IMR-90 (cell line): ENCODE measurements at regions of chr1 and their contacts with region 1.

Region 1: GRCh38 chr1:7401814-7402537 is 369.1 kb upstream of the VAMP3 start:
- DNase-seq: peak; percentile 100
- ATAC-seq: peak; percentile 98
- H3K4me3 ChIP-seq: no peak overlapping the region
- H3K27ac ChIP-seq: peak overlapping the region; percentile 35
- H3K4me1 ChIP-seq: peaks cover 8% of the 10 kb centered on the region
- H3K27me3 ChIP-seq: no peaks in the 10 kb centered on the region
- CTCF ChIP-seq: no peak
- POLR2A ChIP-seq: no peak
- RAD21 ChIP-seq: peak; percentile 44

Region 2: DNA sequence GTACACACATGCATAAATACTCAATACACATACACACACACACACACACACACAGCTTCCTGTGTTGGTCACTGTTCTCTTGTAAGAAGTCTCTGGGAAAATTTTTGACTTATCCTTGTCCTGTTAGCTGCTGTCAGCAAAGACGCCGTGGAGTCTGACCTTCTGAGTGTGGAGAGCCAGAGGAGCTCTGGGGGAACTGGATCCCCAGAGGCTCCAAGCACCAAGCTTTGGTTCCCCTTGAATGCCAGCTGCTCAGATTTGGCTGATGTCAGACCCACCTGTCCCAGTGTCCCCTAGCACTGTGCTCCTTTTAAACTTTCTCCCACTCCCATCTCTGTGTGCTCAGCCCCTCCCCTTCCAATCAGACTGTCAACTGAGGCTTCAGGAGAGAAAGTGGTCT is 297.6 kb before region 1 on chr1:
- CTCF ChIA-PET with region 1: no interaction called
- POLR2A ChIA-PET with region 1: no interaction called
- dilution Hi-C with region 1: no loop called
- in situ Hi-C with region 1: no loop called
- intact Hi-C with region 1: no loop called
- DNase-seq: no peak
- ATAC-seq: no peak
- H3K4me3 ChIP-seq: no peak overlapping the region
- H3K27ac ChIP-seq: no peak overlapping the region
- H3K4me1 ChIP-seq: no peaks in the 10 kb centered on the region
- H3K27me3 ChIP-seq: peaks cover 21% of the 10 kb centered on the region
- CTCF ChIP-seq: no peak
- POLR2A ChIP-seq: no peak
- RAD21 ChIP-seq: no peak

Region 3: GRCh38 chr1:7470880-7471638 is 69.1 kb after region 1 on chr1:
- CTCF ChIA-PET with region 1: no interaction called
- POLR2A ChIA-PET with region 1: no interaction called
- dilution Hi-C with region 1: no loop called
- in situ Hi-C with region 1: no loop called
- intact Hi-C with region 1: loop called (anchors 5 kb)
- DNase-seq: peak; percentile 99
- ATAC-seq: peak; percentile 79
- H3K4me3 ChIP-seq: no peak overlapping the region
- H3K27ac ChIP-seq: peak overlapping the region; percentile 97
- H3K4me1 ChIP-seq: peaks cover 28% of the 10 kb centered on the region
- H3K27me3 ChIP-seq: no peaks in the 10 kb centered on the region
- CTCF ChIP-seq: no peak
- POLR2A ChIP-seq: 0 out of 2 replicates have a peak, but pooled peaks have one; percentile 19
- RAD21 ChIP-seq: peak; percentile 36

Region 4: GRCh38 chr1:7704214-7705047 is 302.5 kb after region 1 on chr1:
- CTCF ChIA-PET with region 1: no interaction called
- POLR2A ChIA-PET with region 1: no interaction called
- dilution Hi-C with region 1: no loop called
- in situ Hi-C with region 1: no loop called
- intact Hi-C with region 1: no loop called
- DNase-seq: peak; percentile 78
- ATAC-seq: peak; percentile 100
- H3K4me3 ChIP-seq: peak overlapping the region; percentile 42
- H3K27ac ChIP-seq: no peak overlapping the region
- H3K4me1 ChIP-seq: peaks cover 3% of the 10 kb centered on the region; the same call in 1 of the 2 replicates
- H3K27me3 ChIP-seq: peaks cover 60% of the 10 kb centered on the region
- CTCF ChIP-seq: no peak
- POLR2A ChIP-seq: no peak
- RAD21 ChIP-seq: no peak